ENCODE measurements at regions of chr20 and their contacts with region 1.

Region 1: DNA sequence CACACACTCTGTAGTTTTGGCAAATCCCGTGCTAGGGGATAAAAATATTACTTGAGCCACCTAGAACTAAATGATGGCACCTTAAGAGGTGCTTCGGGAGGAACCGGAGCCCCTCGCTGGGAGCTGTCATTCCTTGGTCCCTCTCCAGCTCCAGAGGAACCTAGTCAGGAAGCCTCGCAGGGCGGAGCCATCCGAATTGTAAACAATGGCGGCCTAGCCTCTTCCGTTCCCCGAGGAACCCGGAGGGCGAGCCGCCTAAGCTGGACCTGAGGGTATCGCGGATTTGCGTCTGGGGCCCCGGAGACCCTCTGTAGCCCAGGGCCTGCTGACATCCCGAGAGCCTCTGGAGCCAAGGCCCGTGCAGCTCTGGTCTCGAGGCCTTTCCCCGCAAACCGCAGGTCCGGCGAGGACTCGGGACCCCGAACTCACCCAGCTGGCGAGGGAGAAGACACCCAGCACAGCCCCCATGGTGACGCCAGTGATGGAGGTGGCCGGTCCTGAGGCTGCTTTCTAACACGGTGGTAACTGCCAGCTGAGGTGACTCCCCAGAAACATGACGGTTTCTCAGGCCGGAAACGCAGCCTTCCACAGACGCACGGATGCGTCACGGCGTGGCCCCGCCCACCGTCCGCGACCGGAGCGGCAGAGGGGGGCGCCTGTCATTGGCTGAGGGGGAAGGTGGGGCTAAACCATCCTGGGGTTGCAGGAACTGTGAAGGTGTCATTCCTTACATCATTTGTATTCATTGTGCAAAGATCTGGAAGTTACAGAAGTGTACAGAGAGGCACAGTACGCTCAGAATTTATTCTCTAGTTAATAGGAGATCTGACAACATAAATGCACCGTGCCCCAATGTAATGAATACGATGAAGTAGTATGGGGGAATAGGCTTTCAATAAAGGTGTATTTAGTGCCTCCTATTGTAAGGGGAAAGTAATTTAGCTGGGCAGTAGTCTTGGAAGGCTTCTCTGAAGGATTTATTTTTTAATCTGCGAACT is at the start of gene SERINC3:
- DNase-seq: peak; percentile 99
- ATAC-seq: peak; percentile 90 to 99 (median 91)
- H3K4me3 ChIP-seq: peak within 1 kb of the TSS; percentile 94
- H3K4me3 Mint-ChIP-seq: peak within 1 kb of the TSS; percentile 86
- H3K27ac ChIP-seq: peak within 1 kb of the TSS; percentile 96
- H3K27ac Mint-ChIP-seq: peak within 1 kb of the TSS; percentile 96 to 98
- H3K4me1 ChIP-seq: peaks cover 25% of the 10 kb centered on the region
- H3K4me1 Mint-ChIP-seq: peaks cover 46 to 55% of the 10 kb centered on the region in 2 donors
- H3K27me3 ChIP-seq: no peaks in the 10 kb centered on the region
- H3K27me3 Mint-ChIP-seq: no peaks in the 10 kb centered on the region
- CTCF ChIP-seq: no peak
- total RNA-seq, gene SERINC3: 70.1 to 89.6 (median 78.6) TPM

Region 2: DNA sequence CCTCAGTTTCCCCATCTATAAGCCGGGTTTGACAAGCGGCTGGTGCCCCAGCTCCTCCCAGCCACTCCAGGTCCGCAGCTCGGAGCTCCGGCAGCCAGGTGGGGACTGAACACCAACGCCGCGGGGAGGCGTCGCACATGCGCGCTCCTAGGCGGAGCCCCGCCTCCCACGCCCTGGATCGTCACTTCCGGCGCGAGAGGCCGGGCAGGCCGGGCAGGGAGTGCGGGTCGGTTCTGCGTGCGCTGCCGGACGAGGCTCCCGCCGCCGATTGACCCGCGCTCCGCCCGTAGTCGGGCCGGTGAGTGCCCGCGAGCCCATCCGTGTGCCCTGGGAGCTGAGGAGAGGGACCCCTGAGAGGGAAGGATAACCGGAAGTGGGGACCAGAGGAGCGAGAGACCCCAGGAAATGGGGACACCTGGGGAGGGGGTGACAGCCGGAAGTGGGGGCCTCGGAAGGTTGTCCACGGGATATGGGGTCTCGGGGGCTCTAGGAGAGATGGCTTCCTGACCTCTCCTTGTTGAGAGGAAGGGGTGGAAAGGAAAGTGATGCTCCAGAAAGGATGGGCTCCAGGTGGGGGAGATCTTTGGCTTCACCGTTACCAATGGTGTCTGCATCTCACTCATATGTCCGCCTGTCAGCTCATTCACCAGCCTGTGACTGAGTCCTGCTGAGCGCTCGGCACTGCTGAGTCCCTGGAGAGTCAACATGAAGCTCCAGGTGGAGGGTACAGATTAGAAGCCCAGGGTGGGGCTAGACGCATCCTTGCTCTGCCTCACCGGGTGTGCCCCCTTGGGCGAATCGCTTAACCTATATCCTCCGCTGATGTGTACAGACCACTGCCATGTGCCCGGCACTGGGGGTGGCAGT is 45.9 kb before region 1 on chr20 and contains the start of gene TTPAL:
- intact Hi-C with region 1: loop called (anchors 2 kb)
- DNase-seq: peak; percentile 89 to 96
- ATAC-seq: peak; percentile 98 to 99 (median 98)
- H3K4me3 ChIP-seq: peak within 1 kb of the TSS; percentile 94
- H3K4me3 Mint-ChIP-seq: peak within 1 kb of the TSS; percentile 95
- H3K27ac ChIP-seq: peak within 1 kb of the TSS; percentile 97
- H3K27ac Mint-ChIP-seq: peak within 1 kb of the TSS; percentile 93 to 99
- H3K4me1 ChIP-seq: peaks cover 15% of the 10 kb centered on the region
- H3K4me1 Mint-ChIP-seq: peaks cover 26 to 38% of the 10 kb centered on the region in 2 donors
- H3K27me3 ChIP-seq: no peaks in the 10 kb centered on the region
- H3K27me3 Mint-ChIP-seq: no peaks in the 10 kb centered on the region
- CTCF ChIP-seq: peak; percentile 31
- total RNA-seq, gene TTPAL: 17.2 to 22.9 (median 22.5) TPM

Region 3: GRCh38 chr20:44576297-44576696 is 54.5 kb after region 1 on chr20:
- intact Hi-C with region 1: loop called (anchors 5 kb)
- DNase-seq: peak in 1 of 2 donors; percentile 38
- ATAC-seq: peak; percentile 24 to 56 (median 50)
- H3K4me3 ChIP-seq: no peak overlapping the region
- H3K4me3 Mint-ChIP-seq: peak overlapping the region; percentile 70
- H3K27ac ChIP-seq: peak overlapping the region; percentile 31
- H3K27ac Mint-ChIP-seq: peak overlapping the region; percentile 79 to 86
- H3K4me1 ChIP-seq: peaks cover 36% of the 10 kb centered on the region
- H3K4me1 Mint-ChIP-seq: peaks cover 41 to 47% of the 10 kb centered on the region in 2 donors
- H3K27me3 ChIP-seq: no peaks in the 10 kb centered on the region
- H3K27me3 Mint-ChIP-seq: no peaks in the 10 kb centered on the region
- CTCF ChIP-seq: peak; percentile 13

Region 4: GRCh38 chr20:44598423-44599305 is 76.9 kb after region 1 on chr20:
- intact Hi-C with region 1: loop called (anchors 5 kb)
- DNase-seq: peak in 1 of 2 donors; percentile 30
- ATAC-seq: peak; percentile 46 to 77 (median 56)
- H3K4me3 ChIP-seq: no peak overlapping the region
- H3K4me3 Mint-ChIP-seq: peak overlapping the region; percentile 37
- H3K27ac ChIP-seq: peak overlapping the region; percentile 46
- H3K27ac Mint-ChIP-seq: peak overlapping the region; percentile 48 to 82
- H3K4me1 ChIP-seq: peaks cover 29% of the 10 kb centered on the region
- H3K4me1 Mint-ChIP-seq: peaks cover 12 to 23% of the 10 kb centered on the region in 2 donors
- H3K27me3 ChIP-seq: no peaks in the 10 kb centered on the region
- H3K27me3 Mint-ChIP-seq: no peaks in the 10 kb centered on the region
- CTCF ChIP-seq: no peak

Region 5: GRCh38 chr20:44642203-44643153 is 120.7 kb after region 1 on chr20:
- intact Hi-C with region 1: loop called (anchors 1 kb)
- DNase-seq: peak; percentile 57 to 67
- ATAC-seq: peak; percentile 49 to 69 (median 66)
- H3K4me3 ChIP-seq: peak overlapping the region; percentile 5
- H3K4me3 Mint-ChIP-seq: peak overlapping the region; percentile 83
- H3K27ac ChIP-seq: peak overlapping the region; percentile 96
- H3K27ac Mint-ChIP-seq: peak overlapping the region; percentile 89 to 92
- H3K4me1 ChIP-seq: peaks cover 81% of the 10 kb centered on the region
- H3K4me1 Mint-ChIP-seq: peaks cover 77 to 86% of the 10 kb centered on the region in 2 donors
- H3K27me3 ChIP-seq: no peaks in the 10 kb centered on the region
- H3K27me3 Mint-ChIP-seq: no peaks in the 10 kb centered on the region
- CTCF ChIP-seq: no peak

Region 6: GRCh38 chr20:44966030-44966961 is 444.5 kb after region 1 on chr20 and contains the start of gene STK4:
- intact Hi-C with region 1: loop called (anchors 5 kb)
- DNase-seq: peak; percentile 96 to 98
- ATAC-seq: peak; percentile 70 to 92 (median 83)
- H3K4me3 ChIP-seq: peak within 1 kb of the TSS; percentile 87
- H3K4me3 Mint-ChIP-seq: peak within 1 kb of the TSS; percentile 97
- H3K27ac ChIP-seq: peak within 1 kb of the TSS; percentile 87
- H3K27ac Mint-ChIP-seq: peak within 1 kb of the TSS; percentile 98 to 99
- H3K4me1 ChIP-seq: peaks cover 19% of the 10 kb centered on the region
- H3K4me1 Mint-ChIP-seq: peaks cover 55 to 62% of the 10 kb centered on the region in 2 donors
- H3K27me3 ChIP-seq: no peaks in the 10 kb centered on the region
- H3K27me3 Mint-ChIP-seq: no peaks in the 10 kb centered on the region
- CTCF ChIP-seq: peak; percentile 32
- total RNA-seq, gene STK4: 351 to 394 (median 366) TPM